ENCODE measurements at regions of chr4 and their contacts with region 1.

Region 1: DNA sequence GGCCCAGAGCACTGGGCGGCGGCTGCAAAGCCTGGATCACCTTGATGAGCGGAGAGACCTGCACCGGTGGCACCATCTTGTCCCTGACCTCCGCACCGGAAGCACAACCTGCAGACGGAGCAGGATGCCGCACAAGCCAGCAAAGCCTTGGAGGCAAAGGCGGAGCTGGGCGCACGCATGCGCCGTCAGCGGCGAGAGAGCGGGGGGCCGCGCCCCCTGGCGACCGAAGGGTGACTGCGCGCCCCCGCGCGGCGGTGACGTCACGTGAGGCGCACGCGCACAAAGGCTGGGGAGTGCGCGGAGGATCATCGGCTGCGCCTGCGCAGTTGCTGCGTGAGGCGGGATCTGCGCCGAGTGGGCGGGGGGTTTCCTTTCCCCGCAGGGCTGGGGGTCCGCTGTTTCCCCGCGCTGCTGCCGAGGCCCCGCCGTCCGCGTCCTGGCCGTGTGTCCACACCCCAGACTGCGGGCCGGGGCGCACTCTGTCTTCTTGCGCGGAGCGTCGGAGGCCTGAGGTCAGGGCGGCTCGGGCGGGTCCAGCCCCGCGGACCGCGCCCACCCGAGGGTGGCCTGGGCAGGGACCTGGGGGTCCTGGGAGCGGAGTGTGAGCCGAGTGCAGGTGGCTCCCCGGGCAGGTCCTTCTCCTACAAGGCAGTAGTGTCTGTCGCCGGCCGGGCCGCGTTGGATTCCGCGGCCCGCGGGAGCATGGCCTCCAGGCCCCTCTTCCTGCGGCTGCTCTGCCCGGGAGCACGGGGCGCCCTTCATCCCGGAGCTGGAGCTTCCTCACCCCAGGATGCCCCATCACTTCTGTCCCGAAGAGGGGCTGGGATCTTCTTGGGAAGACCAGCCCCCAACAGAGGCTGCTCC is at the starts of genes ATP5ME and MYL5:
- DNase-seq: peak; percentile 98
- H3K4me3 Mint-ChIP-seq: peak within 1 kb of the TSS; percentile 81
- H3K27ac Mint-ChIP-seq: peak within 1 kb of the TSS; percentile 82
- H3K4me1 Mint-ChIP-seq: peaks cover 10% of the 10 kb centered on the region
- H3K27me3 Mint-ChIP-seq: no peaks in the 10 kb centered on the region
- total RNA-seq, gene ATP5ME: 245 to 254 TPM
- total RNA-seq, gene MYL5: 12.4 to 13.0 TPM

Region 2: GRCh38 chr4:107444-108429 is 566.7 kb before region 1 on chr4:
- CTCF ChIA-PET with region 1: no interaction called
- POLR2A ChIA-PET with region 1: no interaction called
- intact Hi-C with region 1: no loop called
- DNase-seq: no peak
- H3K4me3 Mint-ChIP-seq: no peak overlapping the region
- H3K27ac Mint-ChIP-seq: no peak overlapping the region
- H3K4me1 Mint-ChIP-seq: no peaks in the 10 kb centered on the region
- H3K27me3 Mint-ChIP-seq: peaks cover 49% of the 10 kb centered on the region

Region 3: GRCh38 chr4:337143-337931 is 337.1 kb before region 1 on chr4 and contains the start of gene ZNF141:
- CTCF ChIA-PET with region 1: no interaction called
- POLR2A ChIA-PET with region 1: no interaction called
- intact Hi-C with region 1: loop called (anchors 2 kb)
- DNase-seq: peak; percentile 96
- H3K4me3 Mint-ChIP-seq: peak within 1 kb of the TSS; percentile 100
- H3K27ac Mint-ChIP-seq: peak within 1 kb of the TSS; percentile 100
- H3K4me1 Mint-ChIP-seq: peaks cover 11% of the 10 kb centered on the region
- H3K27me3 Mint-ChIP-seq: no peaks in the 10 kb centered on the region
- total RNA-seq, gene ZNF141: 22.4 to 24.2 TPM

Region 4: GRCh38 chr4:498328-498904 is 176.0 kb before region 1 on chr4:
- CTCF ChIA-PET with region 1: no interaction called
- POLR2A ChIA-PET with region 1: no interaction called
- intact Hi-C with region 1: loop called (anchors 2 kb)
- DNase-seq: no peak
- H3K4me3 Mint-ChIP-seq: peak overlapping the region; percentile 95
- H3K27ac Mint-ChIP-seq: peak overlapping the region; percentile 91
- H3K4me1 Mint-ChIP-seq: peaks cover 41% of the 10 kb centered on the region
- H3K27me3 Mint-ChIP-seq: no peaks in the 10 kb centered on the region

Region 5: DNA sequence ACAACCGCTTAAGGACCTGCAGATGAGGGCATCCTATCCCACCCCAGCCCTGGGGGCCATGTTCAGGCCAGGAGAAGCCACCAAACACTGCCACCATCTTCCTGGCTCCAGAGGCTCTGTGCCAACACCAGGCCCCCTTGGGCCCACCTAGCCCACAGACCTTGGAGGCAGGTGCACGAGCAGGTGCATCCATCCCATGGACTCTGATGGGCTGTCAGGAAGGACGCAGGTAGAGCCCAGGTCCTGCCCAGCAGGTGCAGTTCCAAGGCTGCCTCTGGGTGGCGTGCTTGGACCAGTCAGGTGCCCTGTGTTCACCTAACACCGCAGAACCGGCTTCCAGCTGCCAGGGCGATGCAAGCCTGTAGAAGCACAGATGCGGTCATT is 71.9 kb before region 1 on chr4:
- CTCF ChIA-PET with region 1: interaction called, 10 read pairs
- POLR2A ChIA-PET with region 1: no interaction called
- intact Hi-C with region 1: loop called (anchors 2 kb)
- DNase-seq: peak; percentile 83
- H3K4me3 Mint-ChIP-seq: no peak overlapping the region
- H3K27ac Mint-ChIP-seq: no peak overlapping the region
- H3K4me1 Mint-ChIP-seq: peaks cover 4% of the 10 kb centered on the region
- H3K27me3 Mint-ChIP-seq: peaks cover 27% of the 10 kb centered on the region

Region 6: DNA sequence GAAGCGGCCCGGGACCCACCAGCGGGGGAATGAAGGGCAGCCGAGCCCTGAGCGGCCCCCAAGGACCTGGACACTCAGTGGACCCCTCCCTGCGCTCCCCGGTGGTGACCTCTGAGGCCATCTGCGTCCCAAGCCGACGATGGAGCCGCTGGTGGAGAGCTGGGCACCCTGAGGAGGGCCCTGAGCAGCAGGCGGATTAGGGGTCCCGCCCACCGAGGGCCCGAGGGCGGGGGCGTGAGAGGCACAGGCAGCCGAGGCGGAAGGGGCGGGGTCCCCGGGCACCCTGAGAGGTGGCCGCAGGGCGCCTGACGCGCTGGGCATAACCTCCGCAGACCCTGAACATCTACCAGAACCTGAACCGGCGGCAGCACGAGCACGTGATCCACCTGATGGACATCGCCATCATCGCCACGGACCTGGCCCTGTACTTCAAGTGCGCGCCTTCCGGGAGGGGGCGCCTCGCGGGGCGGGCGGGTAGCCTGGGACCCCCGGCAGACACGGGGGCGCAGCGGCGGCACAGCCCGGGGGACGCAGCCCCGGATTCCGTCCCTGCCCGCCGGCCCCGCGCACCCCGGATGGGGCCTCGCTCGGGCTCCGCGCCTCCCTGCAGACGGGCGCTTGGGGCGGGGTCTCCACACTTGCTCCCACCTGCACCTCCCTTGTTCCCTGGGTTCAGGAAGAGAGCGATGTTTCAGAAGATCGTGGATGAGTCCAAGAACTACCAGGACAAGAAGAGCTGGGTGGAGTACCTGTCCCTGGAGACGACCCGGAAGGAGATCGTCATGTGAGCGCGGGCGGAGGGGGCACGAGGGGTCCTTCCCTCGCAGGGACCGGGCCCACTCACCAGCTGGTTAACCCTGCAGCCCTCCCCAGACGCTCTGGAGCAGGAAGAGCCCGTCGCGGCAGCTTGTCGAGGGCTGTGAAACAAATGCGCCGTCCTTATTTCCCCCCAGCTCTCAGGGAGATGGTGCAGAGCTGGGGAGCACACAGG is 10.7 kb before region 1 on chr4:
- CTCF ChIA-PET with region 1: interaction called, 12 read pairs
- POLR2A ChIA-PET with region 1: interaction called, 16 read pairs
- intact Hi-C with region 1: loop called (anchors 1 kb)
- DNase-seq: peak; percentile 82
- H3K4me3 Mint-ChIP-seq: peak overlapping the region; percentile 83
- H3K27ac Mint-ChIP-seq: peak overlapping the region; percentile 82
- H3K4me1 Mint-ChIP-seq: peaks cover 12% of the 10 kb centered on the region
- H3K27me3 Mint-ChIP-seq: no peaks in the 10 kb centered on the region

Region 7: DNA sequence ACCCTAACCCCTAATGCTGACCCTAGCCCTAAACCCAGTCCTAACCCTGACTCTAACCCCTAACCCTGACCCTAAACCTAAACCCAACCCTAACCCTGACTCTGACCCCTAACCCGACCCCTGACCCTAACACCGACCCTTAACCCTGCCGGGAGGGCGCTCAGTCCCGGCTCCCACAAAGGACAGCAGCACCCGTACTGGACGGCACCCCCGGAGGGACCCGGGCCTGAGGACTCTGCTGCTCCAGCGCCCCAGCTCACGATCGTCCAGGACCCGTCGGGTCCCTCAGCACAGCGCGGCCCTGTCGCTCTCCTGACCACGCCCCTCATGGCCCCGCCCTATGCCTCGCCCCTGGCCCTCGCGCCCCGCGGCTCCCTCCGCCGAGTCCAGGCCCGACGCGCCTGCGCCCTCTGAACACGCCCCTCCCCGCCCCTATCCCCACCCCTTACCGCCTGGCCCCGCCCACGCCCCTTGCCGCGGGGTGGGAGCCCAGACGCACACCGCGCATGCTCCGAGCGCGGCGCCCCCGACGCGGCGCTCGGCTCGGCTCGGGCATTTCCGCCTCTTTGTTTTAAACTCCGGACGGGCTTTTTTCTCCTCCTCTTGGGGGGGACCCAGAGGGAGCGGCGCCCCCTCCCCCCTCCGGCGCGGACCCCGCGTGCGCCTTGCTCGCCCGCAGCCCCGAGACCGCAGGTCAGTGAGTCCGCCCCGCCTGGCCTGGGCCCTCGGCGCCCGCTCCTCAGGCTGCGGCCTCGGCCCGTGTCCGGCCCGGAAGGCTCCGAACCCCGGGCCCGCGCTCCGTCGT is 31.1 kb after region 1 on chr4 and contains the start of gene PCGF3:
- CTCF ChIA-PET with region 1: interaction called, 4 read pairs
- POLR2A ChIA-PET with region 1: no interaction called
- intact Hi-C with region 1: loop called (anchors 1 kb)
- DNase-seq: peak; percentile 98
- H3K4me3 Mint-ChIP-seq: peak within 1 kb of the TSS; percentile 75
- H3K27ac Mint-ChIP-seq: peak within 1 kb of the TSS; percentile 23
- H3K4me1 Mint-ChIP-seq: peaks cover 22% of the 10 kb centered on the region
- H3K27me3 Mint-ChIP-seq: no peaks in the 10 kb centered on the region
- total RNA-seq, gene PCGF3: 27.8 to 29.3 TPM

Region 8: DNA sequence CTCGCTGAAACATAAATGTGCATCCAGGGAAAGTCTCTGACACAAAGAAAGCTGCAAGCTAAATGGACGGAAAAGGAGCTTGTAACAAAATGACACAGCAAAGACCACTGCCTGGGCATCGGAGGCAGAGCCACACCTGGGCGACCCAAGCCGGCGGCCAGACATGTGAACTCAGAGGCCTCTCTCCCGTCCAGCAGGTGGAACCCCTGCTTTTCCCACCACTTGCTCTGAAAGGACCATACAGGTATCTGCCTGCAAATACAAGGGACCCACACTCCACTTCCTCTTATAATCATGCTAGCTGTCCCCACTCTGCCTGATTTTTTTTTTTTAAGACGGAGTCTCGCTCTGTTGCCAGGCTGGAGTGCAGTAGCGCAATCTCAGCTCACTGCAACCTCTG is 139.5 kb after region 1 on chr4:
- CTCF ChIA-PET with region 1: no interaction called
- POLR2A ChIA-PET with region 1: no interaction called
- intact Hi-C with region 1: no loop called
- DNase-seq: no peak
- H3K4me3 Mint-ChIP-seq: no peak overlapping the region
- H3K27ac Mint-ChIP-seq: no peak overlapping the region
- H3K4me1 Mint-ChIP-seq: no peaks in the 10 kb centered on the region
- H3K27me3 Mint-ChIP-seq: peaks cover 40% of the 10 kb centered on the region

Measured in activated CD4-positive, alpha-beta memory T cell treated with anti-CD3 and anti-CD28 coated beads for 36 hours (primary cell).